ENCODE measurements at regions of chr18 and their contacts with region 1.

Region 1: DNA sequence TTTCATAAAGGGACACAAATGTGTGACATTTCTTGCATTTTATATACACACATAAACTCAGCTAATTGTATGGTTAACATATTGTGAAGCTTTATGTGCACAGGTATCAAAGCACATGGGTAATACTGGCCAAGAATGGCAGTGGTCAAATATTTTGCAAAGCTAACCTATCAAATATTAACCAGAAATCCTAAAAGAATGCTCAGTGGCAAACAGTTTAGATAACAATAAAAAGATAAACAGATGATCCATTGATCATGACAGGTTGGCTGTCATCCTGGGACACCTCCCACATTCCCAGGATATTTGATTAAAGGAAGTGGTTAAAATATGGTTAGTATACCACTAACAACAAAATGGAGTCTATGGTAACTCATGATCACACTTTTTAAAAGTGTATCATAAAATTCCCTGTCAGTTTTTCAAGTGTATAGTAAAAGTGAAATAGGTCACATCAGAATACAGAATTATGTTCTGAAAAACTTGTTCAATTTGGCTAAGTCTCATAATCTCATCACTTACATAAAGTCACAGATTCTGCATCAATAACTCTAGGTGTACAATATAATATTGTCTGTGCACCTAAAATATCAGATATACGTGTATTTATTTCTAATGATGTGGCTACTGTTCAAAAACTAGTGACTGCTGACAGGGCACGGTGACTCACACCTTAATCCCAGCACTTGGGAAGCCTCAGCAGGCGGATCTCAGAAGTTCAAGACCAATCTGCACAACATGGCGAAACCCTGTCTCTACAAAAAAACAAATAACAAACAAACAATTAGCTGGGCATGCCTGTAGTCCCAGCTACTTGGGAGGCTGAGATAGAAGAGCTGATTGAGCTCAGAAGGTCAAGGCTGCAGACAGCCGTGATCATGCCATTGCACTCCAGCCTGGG is 48.9 kb downstream of the CDH2 start:
- DNase-seq: peak; percentile 92
- ATAC-seq: peak; percentile 93
- H3K4me3 ChIP-seq: peak overlapping the region in 2 of 3 experiments; percentile 14 to 54; a peak in 3 of 6 replicates
- H3K27ac ChIP-seq: peak overlapping the region; percentile 65
- H3K4me1 ChIP-seq: peaks cover 60% of the 10 kb centered on the region
- H3K27me3 ChIP-seq: no peaks in the 10 kb centered on the region
- CTCF ChIP-seq: no peak
- EP300 ChIP-seq: peak; percentile 4 to 94; a peak in 2 of 4 replicates
- POLR2A ChIP-seq: no peak
- RAD21 ChIP-seq: no peak

Region 2: DNA sequence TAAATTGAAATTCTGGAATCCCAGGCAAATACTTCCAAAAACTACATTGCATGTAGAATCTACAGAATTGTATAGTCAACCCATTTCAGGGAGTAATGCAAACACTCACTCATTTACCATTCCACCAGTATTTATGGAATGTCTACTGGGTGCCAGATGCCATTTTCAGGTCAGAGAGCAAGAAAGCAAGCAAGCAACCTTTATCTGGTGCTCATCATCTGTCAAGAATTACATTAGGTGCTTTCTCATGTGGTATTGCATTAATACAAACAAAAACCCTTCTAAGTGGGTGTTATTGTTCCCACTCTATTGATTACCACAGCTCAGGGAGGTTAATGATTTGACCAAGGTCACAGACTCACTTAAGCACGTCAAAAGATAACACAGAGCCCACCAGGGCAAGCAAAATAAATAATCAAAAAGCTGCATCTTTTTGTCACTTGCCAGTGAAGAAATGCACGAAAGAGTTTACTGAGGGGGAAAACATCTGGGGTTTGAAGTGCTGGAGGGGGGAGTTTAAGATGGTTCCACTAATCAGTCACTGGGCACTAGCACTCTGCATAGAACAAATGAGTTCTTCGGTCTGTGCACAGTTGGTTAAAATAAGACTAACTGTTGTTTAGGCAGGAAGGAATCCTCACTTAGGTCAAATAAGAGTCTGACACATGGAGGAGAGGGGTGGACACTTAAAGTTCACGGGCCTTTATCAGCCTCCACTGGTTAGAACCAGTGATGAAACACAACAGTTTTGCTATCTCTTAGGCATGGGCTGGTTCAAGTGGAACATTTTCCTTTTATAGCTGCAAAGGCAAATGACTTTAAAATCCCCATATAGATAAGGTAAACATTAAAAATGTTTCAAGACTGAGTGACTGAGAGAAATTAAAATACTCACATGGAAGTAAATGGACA is 159.8 kb before region 1 on chr18:
- CTCF ChIA-PET with region 1: no interaction called
- POLR2A ChIA-PET with region 1: no interaction called
- in situ Hi-C with region 1: no loop called
- intact Hi-C with region 1: loop called (anchors 1 kb)
- DNase-seq: peak; percentile 55
- ATAC-seq: peak; percentile 81
- H3K4me3 ChIP-seq: no peak overlapping the region
- H3K27ac ChIP-seq: peak overlapping the region; percentile 25
- H3K4me1 ChIP-seq: peaks cover 14% of the 10 kb centered on the region
- H3K27me3 ChIP-seq: no peaks in the 10 kb centered on the region
- CTCF ChIP-seq: no peak
- EP300 ChIP-seq: peak in 1 of 2 experiments; percentile 45; a peak in 1 of 4 replicates
- POLR2A ChIP-seq: no peak
- RAD21 ChIP-seq: no peak

Region 3: DNA sequence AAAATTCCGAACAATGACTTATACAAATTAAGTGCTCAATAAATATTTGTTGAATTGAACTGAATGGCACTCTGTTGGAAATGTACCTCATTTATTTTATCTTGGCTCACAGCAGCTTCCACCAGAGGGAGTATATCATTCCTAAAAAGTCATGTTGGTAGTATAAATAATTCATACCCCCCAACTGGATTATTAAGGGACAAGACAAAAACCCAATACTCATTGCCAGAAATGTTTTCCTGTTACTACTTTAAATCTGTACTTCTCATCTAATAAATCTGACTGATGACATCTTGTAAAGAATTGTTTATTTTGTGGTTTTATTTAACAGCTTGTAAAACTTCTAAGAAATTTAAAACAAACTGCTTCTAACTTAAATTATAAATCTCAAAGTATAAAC is 114.9 kb before region 1 on chr18:
- CTCF ChIA-PET with region 1: no interaction called
- POLR2A ChIA-PET with region 1: no interaction called
- in situ Hi-C with region 1: no loop called
- intact Hi-C with region 1: loop called (anchors 5 kb)
- DNase-seq: peak; percentile 13
- ATAC-seq: no peak
- H3K4me3 ChIP-seq: no peak overlapping the region
- H3K27ac ChIP-seq: no peak overlapping the region
- H3K4me1 ChIP-seq: peaks cover 8% of the 10 kb centered on the region; the same call in 1 of the 2 replicates
- H3K27me3 ChIP-seq: no peaks in the 10 kb centered on the region
- CTCF ChIP-seq: no peak; the same call in 1 of the 2 replicates
- EP300 ChIP-seq: no peak
- POLR2A ChIP-seq: no peak
- RAD21 ChIP-seq: no peak

Region 4: GRCh38 chr18:28091197-28091596 is 36.8 kb before region 1 on chr18:
- CTCF ChIA-PET with region 1: no interaction called
- POLR2A ChIA-PET with region 1: interaction called, 7 read pairs
- in situ Hi-C with region 1: no loop called
- intact Hi-C with region 1: loop called (anchors 2 kb)
- DNase-seq: peak; percentile 84
- ATAC-seq: peak; percentile 72
- H3K4me3 ChIP-seq: peak overlapping the region; percentile 16 to 53 (median 33); a peak in 4 of 6 replicates
- H3K27ac ChIP-seq: peak overlapping the region; percentile 71
- H3K4me1 ChIP-seq: peaks cover 71% of the 10 kb centered on the region
- H3K27me3 ChIP-seq: no peaks in the 10 kb centered on the region
- CTCF ChIP-seq: no peak
- EP300 ChIP-seq: peak in 1 of 2 experiments; percentile 87; a peak in 3 of 4 replicates
- POLR2A ChIP-seq: no peak
- RAD21 ChIP-seq: no peak

Region 5: DNA sequence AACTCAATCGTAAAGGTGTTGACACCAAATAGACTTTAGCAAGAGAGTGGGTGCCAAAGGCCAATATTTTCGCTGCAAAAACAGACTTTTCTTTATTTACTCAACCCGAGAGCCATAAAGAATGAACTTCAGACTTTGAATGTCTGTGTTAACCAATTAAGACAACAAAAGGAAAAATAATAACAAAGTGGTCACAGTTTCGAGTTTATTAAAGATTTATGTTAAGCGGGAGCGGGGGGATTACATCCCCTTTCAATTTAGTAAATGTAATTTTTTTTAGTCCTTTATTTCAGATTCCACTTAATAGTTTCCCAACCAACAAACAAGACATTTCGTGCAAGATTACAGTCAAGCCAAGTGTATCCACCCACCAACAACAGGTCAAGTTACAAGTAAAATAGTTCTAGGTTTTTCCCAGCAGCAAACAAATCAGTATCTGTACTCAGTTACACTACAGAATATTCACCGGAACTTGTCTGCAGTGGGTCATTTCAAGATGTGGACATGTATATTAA is 39.9 kb after region 1 on chr18:
- CTCF ChIA-PET with region 1: interaction called, 4 read pairs
- POLR2A ChIA-PET with region 1: interaction called, 7 read pairs
- in situ Hi-C with region 1: no loop called
- intact Hi-C with region 1: loop called (anchors 2 kb)
- DNase-seq: peak; percentile 82
- ATAC-seq: peak; percentile 94
- H3K4me3 ChIP-seq: peak overlapping the region; percentile 18 to 52 (median 30); a peak in 5 of 6 replicates
- H3K27ac ChIP-seq: peak overlapping the region; percentile 65
- H3K4me1 ChIP-seq: peaks cover 88% of the 10 kb centered on the region
- H3K27me3 ChIP-seq: no peaks in the 10 kb centered on the region
- CTCF ChIP-seq: no peak
- EP300 ChIP-seq: peak; percentile 74 to 76; a peak in 2 of 4 replicates
- POLR2A ChIP-seq: no peak
- RAD21 ChIP-seq: no peak

Region 6: GRCh38 chr18:28236487-28236886 is 108.5 kb after region 1 on chr18:
- CTCF ChIA-PET with region 1: no interaction called
- POLR2A ChIA-PET with region 1: no interaction called
- in situ Hi-C with region 1: no loop called
- intact Hi-C with region 1: no loop called
- DNase-seq: no peak
- ATAC-seq: no peak
- H3K4me3 ChIP-seq: no peak overlapping the region
- H3K27ac ChIP-seq: no peak overlapping the region
- H3K4me1 ChIP-seq: no peaks in the 10 kb centered on the region
- H3K27me3 ChIP-seq: no peaks in the 10 kb centered on the region
- CTCF ChIP-seq: no peak
- EP300 ChIP-seq: no peak
- POLR2A ChIP-seq: no peak
- RAD21 ChIP-seq: no peak

Region 7: GRCh38 chr18:28439870-28440269 is 311.9 kb after region 1 on chr18:
- CTCF ChIA-PET with region 1: no interaction called
- POLR2A ChIA-PET with region 1: no interaction called
- in situ Hi-C with region 1: no loop called
- intact Hi-C with region 1: no loop called
- DNase-seq: no peak
- ATAC-seq: no peak; the same call in 2 of the 3 replicates
- H3K4me3 ChIP-seq: no peak overlapping the region
- H3K27ac ChIP-seq: no peak overlapping the region
- H3K4me1 ChIP-seq: no peaks in the 10 kb centered on the region
- H3K27me3 ChIP-seq: no peaks in the 10 kb centered on the region
- CTCF ChIP-seq: no peak
- EP300 ChIP-seq: no peak
- POLR2A ChIP-seq: no peak
- RAD21 ChIP-seq: no peak